ENCODE measurements at regions of chr5 and their contacts with region 1.

Region 1: GRCh38 chr5:35617435-35618303 is at the start of gene SPEF2:
- DNase-seq: peak; percentile 86
- H3K4me3 Mint-ChIP-seq: peak within 1 kb of the TSS; percentile 90
- H3K27ac Mint-ChIP-seq: peak within 1 kb of the TSS; percentile 88
- H3K4me1 Mint-ChIP-seq: peaks cover 16% of the 10 kb centered on the region
- H3K27me3 Mint-ChIP-seq: no peaks in the 10 kb centered on the region
- total RNA-seq, gene SPEF2: 6.5 to 6.6 TPM

Region 2: DNA sequence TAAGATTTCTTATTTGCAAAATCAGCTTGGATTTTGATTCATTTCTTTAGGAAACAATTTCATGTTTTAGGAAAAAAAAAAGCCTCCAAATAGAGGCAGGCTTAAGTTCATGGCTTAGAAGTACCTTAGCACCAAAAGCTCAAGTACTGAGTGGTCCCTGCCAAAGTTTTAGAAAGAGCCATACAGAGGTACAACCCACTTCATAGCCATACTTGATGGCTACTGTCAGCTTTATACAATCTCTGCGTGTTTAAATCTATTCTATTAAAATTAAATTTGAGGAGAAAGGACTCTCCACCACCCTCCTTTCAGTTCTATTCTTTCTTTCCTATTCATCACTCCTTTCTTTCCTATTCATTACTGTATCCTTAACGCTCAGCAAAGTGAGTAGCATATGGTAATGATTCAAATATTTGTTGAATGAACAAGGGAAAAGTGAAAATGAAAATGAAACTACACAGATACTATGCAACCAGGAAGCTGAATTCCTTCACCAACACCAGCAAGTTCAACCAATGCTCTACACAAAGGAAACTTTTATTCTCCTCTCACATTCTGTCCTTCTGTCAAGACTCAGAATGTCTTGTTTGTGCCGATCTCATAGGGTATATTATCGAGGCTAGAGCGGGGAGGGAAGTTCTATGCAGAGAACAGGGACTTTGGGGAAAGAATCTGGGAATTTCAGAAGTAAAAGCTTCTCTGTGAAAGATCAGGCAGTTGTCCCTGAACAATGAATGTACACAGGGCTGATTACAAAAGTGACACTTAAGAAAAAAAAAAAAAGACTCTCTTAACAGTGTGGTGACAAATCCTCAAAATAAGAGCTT is 138.6 kb before region 1 on chr5:
- CTCF ChIA-PET with region 1: no interaction called
- intact Hi-C with region 1: loop called (anchors 5 kb)
- DNase-seq: no peak
- H3K4me3 Mint-ChIP-seq: peak overlapping the region; percentile 51
- H3K27ac Mint-ChIP-seq: peak overlapping the region; percentile 81
- H3K4me1 Mint-ChIP-seq: peaks cover 9% of the 10 kb centered on the region
- H3K27me3 Mint-ChIP-seq: no peaks in the 10 kb centered on the region

Region 3: GRCh38 chr5:35644543-35644942 is 26.9 kb after region 1 on chr5:
- CTCF ChIA-PET with region 1: interaction called, 4 read pairs
- intact Hi-C with region 1: loop called (anchors 1 kb)
- DNase-seq: no peak
- H3K4me3 Mint-ChIP-seq: no peak overlapping the region
- H3K27ac Mint-ChIP-seq: no peak overlapping the region
- H3K4me1 Mint-ChIP-seq: no peaks in the 10 kb centered on the region
- H3K27me3 Mint-ChIP-seq: no peaks in the 10 kb centered on the region

Region 4: DNA sequence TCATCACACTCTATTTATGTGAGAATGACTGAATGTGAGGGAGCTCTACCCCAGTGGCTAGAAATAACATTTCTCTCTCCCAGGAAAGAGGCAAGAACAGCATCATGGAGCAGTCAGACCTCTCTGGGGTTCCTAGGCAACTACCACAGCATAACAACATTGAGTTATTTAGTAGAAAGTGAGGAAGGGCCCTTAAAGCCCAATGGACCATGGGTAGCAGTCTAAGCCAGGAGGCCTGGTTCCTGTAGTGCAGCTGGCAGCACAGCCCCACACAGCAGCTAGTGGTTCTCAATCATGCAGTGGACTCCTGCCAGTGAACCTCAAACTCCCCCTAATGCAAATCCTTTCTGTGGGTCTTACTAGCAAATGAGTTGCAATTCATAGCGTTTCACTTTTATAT is 55.3 kb after region 1 on chr5:
- CTCF ChIA-PET with region 1: interaction called, 4 read pairs
- intact Hi-C with region 1: loop called (anchors 1 kb)
- DNase-seq: peak; percentile 73
- H3K4me3 Mint-ChIP-seq: no peak overlapping the region
- H3K27ac Mint-ChIP-seq: peak overlapping the region; percentile 75
- H3K4me1 Mint-ChIP-seq: peaks cover 63% of the 10 kb centered on the region
- H3K27me3 Mint-ChIP-seq: no peaks in the 10 kb centered on the region

Region 5: GRCh38 chr5:36151434-36152323 is 534.0 kb after region 1 on chr5 and contains the starts of genes LMBRD2 and SKP2:
- CTCF ChIA-PET with region 1: no interaction called
- intact Hi-C with region 1: loop called (anchors 5 kb)
- DNase-seq: peak; percentile 98
- H3K4me3 Mint-ChIP-seq: peak within 1 kb of the TSS; percentile 96
- H3K27ac Mint-ChIP-seq: peak within 1 kb of the TSS; percentile 76
- H3K4me1 Mint-ChIP-seq: peaks cover 67% of the 10 kb centered on the region
- H3K27me3 Mint-ChIP-seq: no peaks in the 10 kb centered on the region
- total RNA-seq, gene LMBRD2: 7.6 to 8.0 TPM
- total RNA-seq, gene SKP2: 44.4 to 48.1 TPM